Caco-2 (cell line): ENCODE measurements at regions of chr10 and their contacts with region 1.

Region 1: DNA sequence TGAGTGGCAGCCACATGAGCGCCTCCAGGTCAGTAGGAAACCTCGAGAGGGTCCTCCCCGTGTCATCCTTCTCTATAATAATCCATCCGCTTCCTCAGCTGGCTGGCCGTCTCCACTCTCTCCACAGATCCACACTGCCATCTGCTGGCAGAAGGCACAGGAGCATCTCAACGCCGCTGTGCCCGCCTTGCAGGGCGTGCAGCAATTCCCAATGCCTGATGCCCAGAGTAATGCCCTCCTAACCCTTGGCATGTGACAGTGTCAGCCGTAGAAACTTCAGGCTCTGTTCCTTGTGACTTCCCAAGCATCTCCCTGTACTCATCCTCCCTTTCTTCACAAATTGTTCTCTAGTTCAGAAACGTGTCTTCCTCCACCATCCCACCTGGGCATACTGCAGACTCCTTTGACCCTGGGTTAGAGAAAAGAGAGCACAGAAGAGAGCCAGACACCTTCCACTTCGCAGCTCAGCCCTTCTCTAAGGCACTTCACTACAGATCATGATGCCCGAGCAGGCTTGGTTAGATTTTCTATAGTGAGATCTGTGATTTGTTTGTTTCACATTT is 70.8 kb downstream of the XPNPEP1 start:
- DNase-seq: peak; percentile 71 to 81
- H3K4me3 ChIP-seq: no peak overlapping the region
- H3K4me3 Mint-ChIP-seq: no peak overlapping the region
- H3K27ac Mint-ChIP-seq: no peak overlapping the region
- H3K4me1 ChIP-seq: no peaks in the 10 kb centered on the region; the same call in 1 of the 2 replicates
- H3K4me1 Mint-ChIP-seq: peaks cover 7% of the 10 kb centered on the region
- H3K27me3 ChIP-seq: no peaks in the 10 kb centered on the region
- H3K27me3 Mint-ChIP-seq: peaks cover 6% of the 10 kb centered on the region
- CTCF ChIP-seq: peak; percentile 89 to 95

Region 2: GRCh38 chr10:109411917-109412316 is 440.6 kb before region 1 on chr10:
- CTCF ChIA-PET with region 1: no interaction called
- POLR2A ChIA-PET with region 1: no interaction called
- intact Hi-C with region 1: loop called (anchors 5 kb)
- DNase-seq: peak in 1 of 2 experiments; percentile 10
- H3K4me3 ChIP-seq: no peak overlapping the region
- H3K4me3 Mint-ChIP-seq: no peak overlapping the region
- H3K27ac Mint-ChIP-seq: no peak overlapping the region
- H3K4me1 ChIP-seq: no peaks in the 10 kb centered on the region
- H3K4me1 Mint-ChIP-seq: no peaks in the 10 kb centered on the region
- H3K27me3 ChIP-seq: no peaks in the 10 kb centered on the region
- H3K27me3 Mint-ChIP-seq: no peaks in the 10 kb centered on the region
- CTCF ChIP-seq: no peak

Region 3: DNA sequence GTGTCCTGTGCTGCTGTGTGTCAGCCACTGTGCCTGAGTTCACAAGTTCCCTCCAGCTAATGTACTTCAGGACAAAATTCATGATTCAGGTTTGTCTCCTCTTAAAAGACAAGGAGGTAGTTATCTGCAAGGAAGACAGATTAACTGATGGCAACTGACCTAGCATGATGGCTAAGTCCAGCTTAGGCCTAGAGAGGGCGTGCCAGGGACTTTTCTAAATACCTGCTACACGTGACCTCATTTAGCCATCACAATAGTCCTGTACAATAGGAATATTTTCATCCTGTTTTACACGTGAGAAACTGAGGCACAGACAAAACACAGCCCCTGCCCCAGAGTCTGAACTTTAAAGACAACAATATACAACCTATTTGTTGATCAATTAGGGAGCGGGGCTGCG is 204.9 kb before region 1 on chr10:
- CTCF ChIA-PET with region 1: no interaction called
- POLR2A ChIA-PET with region 1: no interaction called
- intact Hi-C with region 1: loop called (anchors 5 kb)
- DNase-seq: no peak
- H3K4me3 ChIP-seq: no peak overlapping the region
- H3K4me3 Mint-ChIP-seq: no peak overlapping the region
- H3K27ac Mint-ChIP-seq: no peak overlapping the region
- H3K4me1 ChIP-seq: no peaks in the 10 kb centered on the region
- H3K4me1 Mint-ChIP-seq: no peaks in the 10 kb centered on the region
- H3K27me3 ChIP-seq: no peaks in the 10 kb centered on the region
- H3K27me3 Mint-ChIP-seq: peaks cover 9% of the 10 kb centered on the region
- CTCF ChIP-seq: no peak